GM12878 (cell line): ENCODE measurements at regions of chr15 and their contacts with region 1.

Region 1: GRCh38 chr15:63093486-63094205 is 28.0 kb upstream of the LACTB start:
- DNase-seq: peak; percentile 35
- ATAC-seq: peak; percentile 99
- H3K4me3 ChIP-seq: no peak overlapping the region
- H3K27ac ChIP-seq: no peak overlapping the region
- H3K4me1 ChIP-seq: no peaks in the 10 kb centered on the region
- H3K27me3 ChIP-seq: no peaks in the 10 kb centered on the region; a peak in 2 of 4 replicates
- CTCF ChIP-seq: peak; percentile 83 to 89 (median 84)
- EP300 ChIP-seq: no peak
- POLR2A ChIP-seq: no peak
- RAD21 ChIP-seq: peak; percentile 91

Region 2: GRCh38 chr15:62770752-62771151 is 322.9 kb before region 1 on chr15:
- CTCF ChIA-PET with region 1: interaction called, 4 read pairs
- POLR2A ChIA-PET with region 1: no interaction called
- RAD21 ChIA-PET with region 1: no interaction called
- SMC1A ChIA-PET with region 1: no interaction called
- in situ Hi-C with region 1: loop called (anchors 10 kb)
- intact Hi-C with region 1: no loop called
- DNase-seq: no peak
- ATAC-seq: no peak
- H3K4me3 ChIP-seq: no peak overlapping the region
- H3K27ac ChIP-seq: no peak overlapping the region
- H3K4me1 ChIP-seq: no peaks in the 10 kb centered on the region
- H3K27me3 ChIP-seq: no peaks in the 10 kb centered on the region
- CTCF ChIP-seq: no peak
- EP300 ChIP-seq: no peak
- POLR2A ChIP-seq: no peak
- RAD21 ChIP-seq: no peak

Region 3: GRCh38 chr15:62782039-62782791 is 311.4 kb before region 1 on chr15:
- CTCF ChIA-PET with region 1: interaction called, 10 read pairs
- POLR2A ChIA-PET with region 1: no interaction called
- RAD21 ChIA-PET with region 1: interaction called, 4 read pairs
- SMC1A ChIA-PET with region 1: interaction called, 3 read pairs
- in situ Hi-C with region 1: loop called (anchors 10 kb)
- intact Hi-C with region 1: loop called (anchors 1 kb)
- DNase-seq: no peak
- ATAC-seq: peak; percentile 91
- H3K4me3 ChIP-seq: no peak overlapping the region
- H3K27ac ChIP-seq: no peak overlapping the region
- H3K4me1 ChIP-seq: no peaks in the 10 kb centered on the region
- H3K27me3 ChIP-seq: peaks cover 0 to 2% of the 10 kb centered on the region in 2 experiments; a peak in 1 of 4 replicates
- CTCF ChIP-seq: peak; percentile 31 to 69 (median 36); a peak in 4 of 6 replicates
- EP300 ChIP-seq: no peak
- POLR2A ChIP-seq: no peak
- RAD21 ChIP-seq: peak; percentile 73

Region 4: GRCh38 chr15:62828364-62828763 is 265.3 kb before region 1 on chr15:
- CTCF ChIA-PET with region 1: no interaction called
- POLR2A ChIA-PET with region 1: no interaction called
- RAD21 ChIA-PET with region 1: no interaction called
- SMC1A ChIA-PET with region 1: no interaction called
- in situ Hi-C with region 1: no loop called
- intact Hi-C with region 1: no loop called
- DNase-seq: no peak
- ATAC-seq: no peak
- H3K4me3 ChIP-seq: no peak overlapping the region
- H3K27ac ChIP-seq: no peak overlapping the region
- H3K4me1 ChIP-seq: no peaks in the 10 kb centered on the region
- H3K27me3 ChIP-seq: no peaks in the 10 kb centered on the region
- CTCF ChIP-seq: no peak
- EP300 ChIP-seq: no peak
- POLR2A ChIP-seq: no peak
- RAD21 ChIP-seq: no peak

Region 5: DNA sequence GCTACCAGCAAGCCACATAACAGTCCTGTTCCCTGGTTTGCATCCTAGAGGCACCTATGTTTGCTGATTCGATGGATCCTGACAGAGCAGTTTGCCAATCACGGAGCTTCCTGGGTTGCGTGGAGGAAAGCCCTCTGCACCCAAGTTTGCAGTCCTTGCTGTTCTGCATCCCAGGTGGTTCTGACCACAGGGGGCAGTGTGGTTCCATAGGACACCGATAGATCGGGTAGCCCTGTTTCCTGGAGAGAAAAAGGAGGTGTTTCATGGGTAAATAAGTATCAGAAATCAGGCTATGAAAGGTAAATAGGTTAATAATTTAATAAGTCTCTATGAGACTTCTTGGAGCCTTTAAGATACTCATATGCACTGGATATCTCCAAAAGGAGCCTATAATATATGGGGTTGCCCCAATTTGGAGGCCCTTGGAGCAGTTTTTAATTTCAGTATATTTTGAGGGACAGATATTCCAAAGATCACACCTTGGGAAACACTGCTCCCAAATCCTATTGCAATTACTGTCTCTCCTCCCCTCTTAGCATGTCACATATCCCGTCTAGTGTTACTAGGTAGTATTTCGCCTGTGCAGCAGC is 245.7 kb before region 1 on chr15:
- CTCF ChIA-PET with region 1: interaction called, 5 read pairs
- POLR2A ChIA-PET with region 1: no interaction called
- RAD21 ChIA-PET with region 1: interaction called, 3 read pairs
- SMC1A ChIA-PET with region 1: interaction called, 4 read pairs
- in situ Hi-C with region 1: loop called (anchors 10 kb)
- intact Hi-C with region 1: loop called (anchors 2 kb)
- DNase-seq: no peak
- ATAC-seq: peak; percentile 65
- H3K4me3 ChIP-seq: no peak overlapping the region
- H3K27ac ChIP-seq: no peak overlapping the region
- H3K4me1 ChIP-seq: no peaks in the 10 kb centered on the region
- H3K27me3 ChIP-seq: peaks cover 0 to 4% of the 10 kb centered on the region in 2 experiments; a peak in 2 of 4 replicates
- CTCF ChIP-seq: peak; percentile 43 to 58 (median 46); a peak in 5 of 6 replicates
- EP300 ChIP-seq: no peak
- POLR2A ChIP-seq: no peak
- RAD21 ChIP-seq: peak; percentile 55

Region 6: GRCh38 chr15:63133803-63134202 is 40.2 kb after region 1 on chr15:
- CTCF ChIA-PET with region 1: no interaction called
- POLR2A ChIA-PET with region 1: no interaction called
- RAD21 ChIA-PET with region 1: no interaction called
- SMC1A ChIA-PET with region 1: no interaction called
- in situ Hi-C with region 1: no loop called
- intact Hi-C with region 1: no loop called
- DNase-seq: no peak
- ATAC-seq: no peak
- H3K4me3 ChIP-seq: no peak overlapping the region
- H3K27ac ChIP-seq: no peak overlapping the region
- H3K4me1 ChIP-seq: no peaks in the 10 kb centered on the region
- H3K27me3 ChIP-seq: no peaks in the 10 kb centered on the region
- CTCF ChIP-seq: no peak
- EP300 ChIP-seq: no peak
- POLR2A ChIP-seq: no peak
- RAD21 ChIP-seq: no peak